Transverse colon (tissue), 4 donors: ENCODE measurements at regions of chr4 and their contacts with region 1.

Region 1: DNA sequence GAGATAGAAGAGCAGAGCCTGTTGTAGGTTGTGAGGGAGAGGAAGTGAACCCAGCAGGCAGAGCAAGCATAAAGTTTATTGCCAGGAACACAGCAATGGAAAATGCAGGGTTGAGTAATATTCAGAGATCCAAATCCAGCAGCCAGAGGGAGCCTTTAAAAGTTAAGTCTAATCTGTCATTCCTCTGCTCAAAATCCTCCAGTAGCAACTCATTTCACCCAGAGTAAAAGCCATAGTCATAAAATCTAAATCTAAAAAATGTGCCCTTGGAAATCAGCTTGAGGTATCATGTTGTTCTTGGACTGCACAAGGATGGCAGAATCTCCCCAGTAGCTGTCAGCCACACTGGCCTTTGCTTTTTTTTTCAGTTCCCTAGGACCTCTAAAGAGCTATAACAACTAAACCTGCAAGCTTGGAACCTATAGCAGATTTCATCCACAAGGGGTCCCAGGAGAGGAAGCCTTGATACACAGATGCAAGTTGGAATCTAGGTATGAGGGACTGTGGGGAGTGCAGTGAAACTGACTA is 62.9 kb upstream of the FRAS1 start:
- DNase-seq: no peak
- H3K4me3 ChIP-seq: no peak overlapping the region
- H3K27ac ChIP-seq: no peak overlapping the region
- H3K4me1 ChIP-seq: no peaks in the 10 kb centered on the region
- H3K27me3 ChIP-seq: no peaks in the 10 kb centered on the region
- CTCF ChIP-seq: peak in 4 of 5 experiments; percentile 24 to 45 (median 36)
- EP300 ChIP-seq: no peak
- POLR2A ChIP-seq: no peak

Region 2: DNA sequence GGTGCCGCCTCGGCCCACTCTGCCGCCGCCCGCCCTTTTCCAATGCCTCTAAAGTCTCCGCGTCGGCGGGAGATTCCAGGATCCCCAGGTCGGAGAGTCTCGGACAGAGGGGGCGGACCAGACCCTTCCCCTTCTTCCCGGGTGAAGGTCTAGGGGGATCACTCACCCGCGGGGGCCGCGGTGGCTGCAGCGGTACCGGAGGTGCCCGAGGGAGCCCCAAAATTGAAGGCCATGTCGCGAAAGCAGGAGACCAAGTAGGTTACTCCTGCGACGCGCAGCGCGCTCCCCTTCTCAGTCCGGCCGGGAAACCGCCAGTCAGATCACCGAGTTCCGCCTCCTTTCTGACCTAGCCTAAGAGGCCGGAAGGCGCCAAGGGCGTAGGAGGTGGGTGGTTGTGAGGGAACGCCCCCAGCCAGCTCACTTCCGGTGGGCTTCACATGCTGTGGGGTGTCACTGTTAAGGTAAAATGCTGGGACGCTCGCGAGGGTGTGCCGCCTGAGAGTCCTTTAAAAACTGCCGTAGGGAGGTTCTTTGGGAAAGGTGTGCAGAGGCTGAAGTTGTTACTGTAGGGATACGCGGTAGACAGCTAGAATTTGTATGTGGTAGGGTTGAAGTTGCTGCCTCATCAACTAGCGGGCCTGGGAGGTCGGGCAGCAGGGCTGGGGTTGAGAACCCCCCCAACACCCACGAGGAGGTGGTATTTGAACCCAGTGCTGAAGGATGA is 1846.0 kb before region 1 on chr4 and contains the start of gene NUP54:
- in situ Hi-C with region 1: no loop called
- intact Hi-C with region 1: no loop called
- DNase-seq: peak; percentile 96
- H3K4me3 ChIP-seq: peak within 1 kb of the TSS; percentile 70 to 96 (median 84)
- H3K27ac ChIP-seq: peak within 1 kb of the TSS; percentile 91 to 97 (median 94)
- H3K4me1 ChIP-seq: peaks cover 17 to 33% (median 22%) of the 10 kb centered on the region in 4 donors
- H3K27me3 ChIP-seq: no peaks in the 10 kb centered on the region
- CTCF ChIP-seq: no peak
- EP300 ChIP-seq: no peak
- POLR2A ChIP-seq: peak; percentile 94
- total RNA-seq, gene NUP54: 7.0 to 142 (median 29.2) TPM

Region 3: DNA sequence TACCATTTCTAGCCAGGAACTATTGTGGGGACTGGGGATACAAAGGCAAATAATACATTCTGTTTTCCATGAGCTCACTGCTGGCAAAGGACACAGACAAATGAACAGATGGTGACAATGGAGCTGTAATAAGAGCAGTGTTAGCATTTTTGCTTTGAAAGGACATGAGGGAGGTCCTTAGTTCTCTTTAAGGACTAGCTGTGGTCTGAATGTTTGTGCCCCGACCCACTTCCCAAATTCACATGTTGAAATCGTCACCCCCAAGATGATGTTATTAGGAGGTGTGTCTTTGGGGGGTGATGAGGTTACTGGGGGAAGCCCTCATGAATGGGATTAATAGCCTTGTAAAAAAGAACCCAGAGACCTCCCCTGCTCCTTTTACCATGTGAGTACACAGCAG is 806.9 kb before region 1 on chr4:
- in situ Hi-C with region 1: no loop called
- intact Hi-C with region 1: loop called (anchors 5 kb)
- DNase-seq: no peak
- H3K4me3 ChIP-seq: no peak overlapping the region
- H3K27ac ChIP-seq: no peak overlapping the region
- H3K4me1 ChIP-seq: peaks cover 0 to 3% (median 0%) of the 10 kb centered on the region in 4 donors
- H3K27me3 ChIP-seq: no peaks in the 10 kb centered on the region
- CTCF ChIP-seq: no peak
- EP300 ChIP-seq: no peak
- POLR2A ChIP-seq: no peak

Region 4: DNA sequence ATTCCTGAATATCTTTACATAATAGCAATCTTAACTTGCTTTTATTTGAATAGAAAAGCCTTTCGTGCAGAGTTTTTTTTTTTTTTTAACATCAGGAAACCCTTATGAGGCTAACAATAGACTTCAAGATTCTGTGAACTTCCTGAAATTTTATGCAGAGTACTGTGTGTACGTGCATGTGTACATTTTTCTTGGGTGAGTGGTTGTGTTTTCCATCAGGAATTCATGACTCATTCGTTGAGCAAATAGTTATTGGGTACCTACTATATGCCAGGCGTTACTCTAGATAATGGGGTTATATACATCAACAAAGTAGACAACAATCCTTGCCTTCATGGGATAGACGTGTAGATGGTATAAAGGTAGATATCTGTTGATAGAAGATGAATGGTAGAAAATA is 72.6 kb before region 1 on chr4:
- in situ Hi-C with region 1: no loop called
- intact Hi-C with region 1: no loop called
- DNase-seq: no peak
- H3K4me3 ChIP-seq: no peak overlapping the region
- H3K27ac ChIP-seq: no peak overlapping the region
- H3K4me1 ChIP-seq: peaks cover 0 to 5% (median 0%) of the 10 kb centered on the region in 4 donors
- H3K27me3 ChIP-seq: no peaks in the 10 kb centered on the region
- CTCF ChIP-seq: no peak
- EP300 ChIP-seq: no peak
- POLR2A ChIP-seq: no peak